ENCODE measurements at regions of chr15 and their contacts with region 1.

Region 1: GRCh38 chr15:67768313-67768991 is 56.9 kb upstream of the SKOR1 start:
- DNase-seq: no peak
- ATAC-seq: no peak
- H3K4me3 ChIP-seq: no peak overlapping the region
- H3K27ac ChIP-seq: peak overlapping the region; percentile 17; the same call in 1 of the 2 replicates
- H3K4me1 ChIP-seq: peaks cover 9% of the 10 kb centered on the region; the same call in 1 of the 2 replicates
- H3K27me3 ChIP-seq: no peaks in the 10 kb centered on the region
- CTCF ChIP-seq: no peak

Region 2: GRCh38 chr15:67584157-67584556 is 184.3 kb before region 1 on chr15:
- CTCF ChIA-PET with region 1: interaction called, 13 read pairs
- POLR2A ChIA-PET with region 1: no interaction called
- in situ Hi-C with region 1: no loop called
- intact Hi-C with region 1: no loop called
- DNase-seq: no peak
- ATAC-seq: no peak
- H3K4me3 ChIP-seq: no peak overlapping the region
- H3K27ac ChIP-seq: no peak overlapping the region
- H3K4me1 ChIP-seq: no peaks in the 10 kb centered on the region
- H3K27me3 ChIP-seq: no peaks in the 10 kb centered on the region
- CTCF ChIP-seq: no peak

Region 3: DNA sequence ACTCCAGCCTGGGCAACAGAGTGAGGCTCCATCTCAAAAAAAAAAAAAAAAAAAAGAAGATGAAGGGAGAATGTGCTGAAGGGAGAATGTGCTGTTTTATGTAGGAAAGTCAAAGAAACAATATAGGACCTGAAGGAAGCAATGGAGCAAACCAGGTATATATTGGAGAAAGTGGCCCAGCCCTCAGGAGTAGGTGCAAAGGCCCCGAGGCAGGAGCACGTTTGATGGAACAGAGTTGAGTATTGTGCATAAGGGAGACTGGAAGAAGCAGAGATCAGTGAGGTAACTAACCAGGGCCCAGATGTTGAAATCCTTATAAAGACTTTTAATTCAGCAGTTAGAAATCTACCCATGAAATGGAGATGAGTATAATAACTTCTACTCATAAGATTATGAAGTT is 146.3 kb before region 1 on chr15:
- CTCF ChIA-PET with region 1: no interaction called
- POLR2A ChIA-PET with region 1: no interaction called
- in situ Hi-C with region 1: no loop called
- intact Hi-C with region 1: no loop called
- DNase-seq: no peak
- ATAC-seq: no peak
- H3K4me3 ChIP-seq: no peak overlapping the region
- H3K27ac ChIP-seq: no peak overlapping the region
- H3K4me1 ChIP-seq: peaks cover 4% of the 10 kb centered on the region; the same call in 1 of the 2 replicates
- H3K27me3 ChIP-seq: no peaks in the 10 kb centered on the region
- CTCF ChIP-seq: no peak